ENCODE measurements at regions of chr16 and their contacts with region 1.

Region 1: GRCh38 chr16:26930786-26931581 is 135.7 kb upstream of the C16orf82 start:
- DNase-seq: no peak
- ATAC-seq: no peak
- H3K4me3 ChIP-seq: no peak overlapping the region
- H3K27ac ChIP-seq: no peak overlapping the region
- H3K4me1 ChIP-seq: no peaks in the 10 kb centered on the region
- H3K27me3 ChIP-seq: peaks cover 0 to 4% (median 0%) of the 10 kb centered on the region in 7 donors
- CTCF ChIP-seq: no peak

Region 2: DNA sequence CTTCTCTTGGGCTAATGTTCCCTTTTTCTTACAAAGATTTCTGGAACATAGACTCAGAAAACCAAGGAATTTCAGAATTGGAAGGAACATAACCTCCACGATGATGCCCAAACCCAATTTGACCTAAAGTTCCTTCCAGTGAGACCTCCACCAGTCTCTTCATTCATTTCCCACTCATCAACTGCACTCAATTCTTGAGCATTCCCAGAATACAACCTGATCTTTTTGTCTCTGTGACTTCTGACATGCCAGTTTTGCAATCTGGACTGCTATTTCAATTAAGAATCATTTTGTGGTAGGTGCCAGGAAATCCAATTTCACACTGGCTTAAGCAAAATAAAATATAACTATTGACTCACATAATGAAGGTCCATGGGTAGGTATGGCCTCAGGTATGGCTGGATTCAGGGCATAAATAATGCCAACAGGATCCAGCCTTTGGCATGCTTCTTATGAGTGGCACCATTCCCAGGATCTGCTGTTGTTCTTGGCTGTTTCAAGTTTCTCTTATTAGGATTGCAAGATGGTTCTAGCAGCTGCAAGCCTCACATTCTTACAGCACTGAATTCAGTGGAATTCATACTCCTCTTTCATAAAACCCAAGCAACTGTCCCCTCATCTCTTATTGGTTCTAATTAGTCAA is 1054.9 kb before region 1 on chr16:
- intact Hi-C with region 1: loop called in 1 of 10 experiments (anchors 2 kb)
- DNase-seq: no peak
- ATAC-seq: no peak
- H3K4me3 ChIP-seq: no peak overlapping the region
- H3K27ac ChIP-seq: no peak overlapping the region
- H3K4me1 ChIP-seq: no peaks in the 10 kb centered on the region
- H3K27me3 ChIP-seq: peaks cover 0 to 5% (median 0%) of the 10 kb centered on the region in 7 donors
- CTCF ChIP-seq: no peak

Region 3: GRCh38 chr16:26863931-26864330 is 67.1 kb before region 1 on chr16:
- intact Hi-C with region 1: no loop called
- DNase-seq: no peak
- ATAC-seq: no peak
- H3K4me3 ChIP-seq: no peak overlapping the region
- H3K27ac ChIP-seq: no peak overlapping the region
- H3K4me1 ChIP-seq: no peaks in the 10 kb centered on the region
- H3K27me3 ChIP-seq: peaks cover 0 to 2% (median 0%) of the 10 kb centered on the region in 7 donors
- CTCF ChIP-seq: no peak

Region 4: GRCh38 chr16:26987597-26988010 is 56.6 kb after region 1 on chr16:
- intact Hi-C with region 1: loop called in 1 of 10 experiments (anchors 10 kb)
- DNase-seq: no peak
- ATAC-seq: no peak
- H3K4me3 ChIP-seq: no peak overlapping the region
- H3K27ac ChIP-seq: no peak overlapping the region
- H3K4me1 ChIP-seq: peaks cover 0 to 9% (median 0%) of the 10 kb centered on the region in 9 donors
- H3K27me3 ChIP-seq: peaks cover 0 to 14% (median 4%) of the 10 kb centered on the region in 7 donors
- CTCF ChIP-seq: no peak

Region 5: DNA sequence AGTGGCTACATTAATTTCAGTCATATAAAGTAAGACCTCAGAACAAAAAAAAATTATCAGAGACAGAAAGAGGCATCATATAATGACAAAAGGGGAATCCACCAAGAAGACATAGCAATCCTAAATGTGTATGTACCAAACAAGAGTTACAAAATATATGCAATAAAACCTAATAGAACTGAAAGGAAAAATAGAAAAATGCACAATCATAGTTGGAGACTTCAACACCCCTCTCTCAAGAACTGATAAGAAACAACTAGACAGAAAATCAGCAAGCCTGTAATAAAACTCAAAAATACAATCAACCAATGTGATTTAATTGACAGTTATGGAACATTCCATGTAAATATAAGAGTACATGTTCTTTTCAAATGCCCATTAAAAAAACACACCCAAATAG is 74.4 kb after region 1 on chr16:
- intact Hi-C with region 1: loop called in 1 of 10 experiments (anchors 10 kb)
- DNase-seq: no peak
- ATAC-seq: no peak
- H3K4me3 ChIP-seq: no peak overlapping the region
- H3K27ac ChIP-seq: no peak overlapping the region
- H3K4me1 ChIP-seq: no peaks in the 10 kb centered on the region
- H3K27me3 ChIP-seq: peaks cover 0 to 18% (median 4%) of the 10 kb centered on the region in 7 donors
- CTCF ChIP-seq: no peak

Measured in heart right ventricle (tissue), 16 donors.